ENCODE measurements at regions of chr4 and their contacts with region 1.

Region 1: DNA sequence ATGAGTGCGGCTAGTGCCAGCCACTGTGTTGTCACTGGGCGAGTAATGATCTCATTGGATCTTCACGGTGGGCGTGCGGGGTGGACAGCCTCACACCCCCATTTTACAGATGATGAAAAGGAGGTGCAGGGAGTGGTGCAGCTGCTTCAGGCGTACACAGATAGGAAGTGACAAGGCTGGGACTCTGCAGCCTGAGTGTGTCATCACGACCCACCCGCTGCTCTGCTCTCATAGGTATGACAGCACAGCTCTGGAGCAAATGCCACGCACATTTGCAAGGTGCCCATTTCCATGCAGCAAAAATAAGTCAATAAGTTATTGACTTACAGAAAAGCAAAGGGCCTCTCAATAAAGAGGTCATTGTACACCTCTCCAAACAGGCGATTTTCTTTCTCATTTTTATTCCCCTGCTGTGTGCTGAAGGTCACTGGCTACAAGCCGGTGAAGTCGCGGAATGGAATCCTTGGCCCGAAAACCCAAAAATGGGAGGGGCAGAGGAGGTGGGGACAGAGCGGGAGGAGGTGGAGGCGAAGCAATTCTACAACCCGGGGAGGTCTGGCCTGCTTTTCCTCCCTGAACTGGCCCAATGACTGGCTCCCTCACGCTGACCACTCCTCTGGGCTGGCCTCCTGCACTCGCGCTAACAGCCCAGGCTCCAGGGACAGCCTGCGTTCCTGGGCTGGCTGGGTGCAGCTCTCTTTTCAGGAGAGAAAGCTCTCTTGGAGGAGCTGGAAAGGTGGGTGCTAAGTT is at the start of gene SOD3:
- DNase-seq: peak; percentile 66 to 96
- H3K4me3 ChIP-seq: peak within 1 kb of the TSS; percentile 48 to 59
- H3K27ac ChIP-seq: peak within 1 kb of the TSS; percentile 95 to 97
- H3K4me1 ChIP-seq: peaks cover 0 to 25% of the 10 kb centered on the region in 2 donors
- H3K27me3 ChIP-seq: no peaks in the 10 kb centered on the region
- CTCF ChIP-seq: no peak
- total RNA-seq, gene SOD3: 893 TPM

Region 2: DNA sequence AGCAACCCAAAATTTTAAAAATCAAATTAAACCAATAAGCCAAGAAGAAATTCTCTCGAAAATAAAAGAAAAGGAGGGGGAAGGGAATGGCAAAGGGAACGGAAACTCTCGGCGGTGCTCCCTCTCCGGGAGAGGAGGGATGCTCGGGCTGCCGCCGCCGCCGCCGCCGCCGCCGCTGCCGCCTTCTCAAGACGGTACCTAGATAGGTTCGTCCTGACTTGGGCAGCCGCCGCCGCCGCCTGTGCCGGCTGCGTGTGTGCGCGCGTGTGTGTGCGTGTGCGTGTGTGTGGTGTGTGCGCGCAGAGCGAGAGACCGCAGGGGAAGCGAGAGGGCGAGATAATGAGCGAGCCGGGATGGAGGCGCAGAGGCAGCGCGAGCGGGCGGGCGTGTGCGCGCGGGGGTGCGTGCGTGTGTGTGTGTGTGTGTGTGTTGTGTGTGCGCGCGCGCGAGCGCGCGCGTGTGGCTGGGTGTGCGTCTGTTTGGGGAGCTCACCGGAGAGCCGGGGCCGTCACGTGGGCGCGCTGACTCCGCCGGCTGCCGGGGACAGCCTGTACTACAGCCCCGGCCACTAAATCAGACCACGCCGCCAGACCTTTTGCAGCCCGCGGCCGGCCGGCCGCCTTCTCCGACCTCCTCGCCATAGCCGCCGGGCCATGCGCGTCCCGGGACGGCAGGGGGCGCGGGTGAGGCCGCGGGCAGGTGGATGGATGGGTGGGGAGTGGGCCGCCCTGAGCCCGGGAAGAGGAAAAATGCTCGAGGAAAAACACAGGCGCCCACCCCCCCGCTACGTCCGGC is 322.4 kb before region 1 on chr4:
- intact Hi-C with region 1: loop called (anchors 5 kb)
- DNase-seq: peak; percentile 31 to 88
- H3K4me3 ChIP-seq: peak overlapping the region; percentile 60 to 81
- H3K27ac ChIP-seq: peak overlapping the region; percentile 31 to 57
- H3K4me1 ChIP-seq: peaks cover 8 to 15% of the 10 kb centered on the region in 2 donors
- H3K27me3 ChIP-seq: no peaks in the 10 kb centered on the region
- CTCF ChIP-seq: peak; percentile 54 to 73 (median 66)

Region 3: DNA sequence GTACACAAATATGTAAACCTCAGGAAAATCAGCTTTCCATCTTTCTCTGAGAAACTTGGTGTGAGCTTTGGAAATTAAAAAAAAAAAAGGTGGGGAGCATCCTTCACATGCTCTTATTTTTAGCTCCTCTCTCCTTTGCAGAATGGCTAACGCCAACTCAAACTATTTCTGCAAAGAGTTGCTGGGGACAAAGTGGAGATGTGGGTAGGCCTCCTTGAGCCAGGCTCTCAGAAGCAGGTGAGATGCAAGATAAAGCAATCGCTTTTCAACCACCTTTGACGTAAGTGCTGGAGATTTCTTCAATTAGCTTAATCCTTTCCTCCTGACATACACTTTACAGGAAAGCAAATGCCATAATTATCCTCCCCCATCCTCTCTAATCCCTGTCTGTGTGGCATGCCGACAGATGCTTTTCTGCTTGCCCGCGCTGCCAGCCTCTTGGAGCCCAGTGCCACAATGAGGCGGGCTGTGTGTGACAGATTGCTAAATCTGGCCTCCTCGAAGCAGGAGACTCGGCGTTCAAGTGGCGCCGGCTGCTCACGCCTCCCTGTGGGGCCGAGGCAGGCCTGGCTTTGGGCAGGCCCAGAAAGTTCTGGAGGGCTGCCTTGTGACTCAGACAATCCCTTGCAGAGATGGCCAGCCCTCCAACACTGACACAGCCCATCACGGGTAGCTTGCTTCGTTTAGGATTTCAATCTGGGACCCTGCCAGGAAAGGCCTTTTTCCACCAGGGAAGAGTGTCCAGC is 64.7 kb before region 1 on chr4:
- intact Hi-C with region 1: loop called (anchors 1 kb)
- DNase-seq: peak; percentile 63 to 94
- H3K4me3 ChIP-seq: no peak overlapping the region
- H3K27ac ChIP-seq: peak overlapping the region; percentile 63 to 78
- H3K4me1 ChIP-seq: peaks cover 3 to 40% of the 10 kb centered on the region in 2 donors
- H3K27me3 ChIP-seq: no peaks in the 10 kb centered on the region
- CTCF ChIP-seq: peak in 1 of 3 experiments; percentile 13

Region 4: GRCh38 chr4:24809815-24810405 is 14.8 kb after region 1 on chr4:
- intact Hi-C with region 1: no loop called
- DNase-seq: no peak
- H3K4me3 ChIP-seq: no peak overlapping the region
- H3K27ac ChIP-seq: peak overlapping the region; percentile 28 to 62
- H3K4me1 ChIP-seq: peaks cover 0 to 3% of the 10 kb centered on the region in 2 donors
- H3K27me3 ChIP-seq: no peaks in the 10 kb centered on the region
- CTCF ChIP-seq: no peak

Region 5: DNA sequence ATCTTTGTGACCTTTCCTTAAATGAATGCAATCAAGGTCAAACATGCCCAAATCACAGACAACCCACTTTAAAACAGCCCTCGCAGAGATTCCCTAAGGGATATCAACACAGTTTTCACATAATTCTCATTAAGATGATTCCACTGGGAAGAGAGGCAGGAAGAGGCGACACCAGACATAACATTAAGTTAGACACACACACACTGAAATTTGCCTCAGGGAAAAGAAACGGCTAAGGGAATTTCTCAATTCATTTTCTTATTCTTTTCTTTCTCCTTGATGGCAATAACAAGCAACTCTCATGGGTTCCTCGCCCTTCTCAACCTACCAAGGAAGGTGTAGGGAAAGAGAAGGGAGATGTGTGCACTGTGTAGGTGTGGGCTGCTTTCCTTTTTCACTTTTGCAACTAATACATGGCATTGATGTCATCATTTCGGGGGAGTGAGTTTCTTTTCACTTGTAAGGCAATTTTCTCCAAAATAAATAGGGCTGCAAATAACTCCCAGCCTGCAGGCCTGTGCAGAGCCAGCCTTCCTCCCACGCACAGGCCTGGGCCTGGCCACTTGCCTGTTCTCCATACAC is 41.7 kb after region 1 on chr4:
- intact Hi-C with region 1: loop called (anchors 5 kb)
- DNase-seq: no peak
- H3K4me3 ChIP-seq: no peak overlapping the region
- H3K27ac ChIP-seq: peak overlapping the region; percentile 10 to 31
- H3K4me1 ChIP-seq: peaks cover 0 to 15% of the 10 kb centered on the region in 2 donors
- H3K27me3 ChIP-seq: no peaks in the 10 kb centered on the region
- CTCF ChIP-seq: no peak

Region 6: GRCh38 chr4:24912252-24913118 is 117.4 kb after region 1 on chr4 and contains the start of gene CCDC149:
- intact Hi-C with region 1: loop called (anchors 2 kb)
- DNase-seq: peak in 1 of 2 donors; percentile 83
- H3K4me3 ChIP-seq: peak within 1 kb of the TSS; percentile 91 to 93
- H3K27ac ChIP-seq: peak within 1 kb of the TSS; percentile 93 to 97
- H3K4me1 ChIP-seq: peaks cover 0 to 8% of the 10 kb centered on the region in 2 donors
- H3K27me3 ChIP-seq: no peaks in the 10 kb centered on the region
- CTCF ChIP-seq: no peak
- total RNA-seq, gene CCDC149: 8.7 TPM